Gastrocnemius medialis (tissue), 4 donors: ENCODE measurements at regions of chr20 and their contacts with region 1.

Region 1: GRCh38 chr20:24497851-24498250 is 28.4 kb downstream of the SYNDIG1 start:
- DNase-seq: no peak
- ATAC-seq: no peak
- H3K4me3 ChIP-seq: no peak overlapping the region
- H3K27ac ChIP-seq: no peak overlapping the region
- H3K4me1 ChIP-seq: no peaks in the 10 kb centered on the region
- H3K27me3 ChIP-seq: no peaks in the 10 kb centered on the region
- CTCF ChIP-seq: no peak
- POLR2A ChIP-seq: no peak

Region 2: DNA sequence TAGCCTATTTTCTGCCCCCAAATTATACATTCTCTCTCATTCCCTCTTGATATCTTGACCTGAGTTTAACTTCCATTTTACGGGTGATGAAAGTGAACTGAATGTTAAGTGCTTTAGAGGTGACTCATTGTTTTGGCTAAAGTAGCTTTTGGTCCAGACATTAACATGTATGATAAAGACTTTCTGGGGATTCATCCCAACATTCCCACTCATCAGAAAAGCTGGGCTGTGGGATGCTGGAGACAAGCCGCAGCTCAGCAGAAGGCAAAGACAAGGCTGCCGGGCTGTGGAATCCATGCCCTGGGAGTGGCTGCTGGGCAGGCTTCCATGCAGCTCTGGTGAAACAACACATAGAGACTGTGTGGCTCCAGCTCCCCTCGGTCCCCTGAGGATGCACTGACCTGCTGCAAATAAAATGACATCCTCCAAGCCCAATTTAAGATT is 118.3 kb before region 1 on chr20:
- in situ Hi-C with region 1: loop called in 1 of 4 experiments (anchors 25 kb)
- intact Hi-C with region 1: no loop called
- DNase-seq: peak in 1 of 2 donors; percentile 27
- ATAC-seq: peak in 1 of 2 donors; percentile 39
- H3K4me3 ChIP-seq: no peak overlapping the region
- H3K27ac ChIP-seq: no peak overlapping the region
- H3K4me1 ChIP-seq: no peaks in the 10 kb centered on the region
- H3K27me3 ChIP-seq: no peaks in the 10 kb centered on the region
- CTCF ChIP-seq: no peak
- POLR2A ChIP-seq: no peak

Region 3: GRCh38 chr20:24560571-24561491 is 63.0 kb after region 1 on chr20:
- in situ Hi-C with region 1: no loop called
- intact Hi-C with region 1: no loop called
- DNase-seq: no peak
- ATAC-seq: no peak
- H3K4me3 ChIP-seq: no peak overlapping the region
- H3K27ac ChIP-seq: no peak overlapping the region
- H3K4me1 ChIP-seq: no peaks in the 10 kb centered on the region
- H3K27me3 ChIP-seq: no peaks in the 10 kb centered on the region
- CTCF ChIP-seq: no peak
- POLR2A ChIP-seq: no peak